ENCODE measurements at regions of chr7 and their contacts with region 1.

Region 1: GRCh38 chr7:159159731-159160130 is 15.1 kb upstream of the VIPR2 start:
- DNase-seq: no peak
- H3K4me3 Mint-ChIP-seq: no peak overlapping the region
- H3K27ac Mint-ChIP-seq: no peak overlapping the region
- H3K4me1 Mint-ChIP-seq: no peaks in the 10 kb centered on the region
- H3K27me3 Mint-ChIP-seq: peaks cover 10% of the 10 kb centered on the region

Region 2: GRCh38 chr7:159036916-159037605 is 122.7 kb before region 1 on chr7:
- intact Hi-C with region 1: no loop called
- DNase-seq: no peak
- H3K4me3 Mint-ChIP-seq: no peak overlapping the region
- H3K27ac Mint-ChIP-seq: no peak overlapping the region
- H3K4me1 Mint-ChIP-seq: peaks cover 6% of the 10 kb centered on the region
- H3K27me3 Mint-ChIP-seq: no peaks in the 10 kb centered on the region

Region 3: DNA sequence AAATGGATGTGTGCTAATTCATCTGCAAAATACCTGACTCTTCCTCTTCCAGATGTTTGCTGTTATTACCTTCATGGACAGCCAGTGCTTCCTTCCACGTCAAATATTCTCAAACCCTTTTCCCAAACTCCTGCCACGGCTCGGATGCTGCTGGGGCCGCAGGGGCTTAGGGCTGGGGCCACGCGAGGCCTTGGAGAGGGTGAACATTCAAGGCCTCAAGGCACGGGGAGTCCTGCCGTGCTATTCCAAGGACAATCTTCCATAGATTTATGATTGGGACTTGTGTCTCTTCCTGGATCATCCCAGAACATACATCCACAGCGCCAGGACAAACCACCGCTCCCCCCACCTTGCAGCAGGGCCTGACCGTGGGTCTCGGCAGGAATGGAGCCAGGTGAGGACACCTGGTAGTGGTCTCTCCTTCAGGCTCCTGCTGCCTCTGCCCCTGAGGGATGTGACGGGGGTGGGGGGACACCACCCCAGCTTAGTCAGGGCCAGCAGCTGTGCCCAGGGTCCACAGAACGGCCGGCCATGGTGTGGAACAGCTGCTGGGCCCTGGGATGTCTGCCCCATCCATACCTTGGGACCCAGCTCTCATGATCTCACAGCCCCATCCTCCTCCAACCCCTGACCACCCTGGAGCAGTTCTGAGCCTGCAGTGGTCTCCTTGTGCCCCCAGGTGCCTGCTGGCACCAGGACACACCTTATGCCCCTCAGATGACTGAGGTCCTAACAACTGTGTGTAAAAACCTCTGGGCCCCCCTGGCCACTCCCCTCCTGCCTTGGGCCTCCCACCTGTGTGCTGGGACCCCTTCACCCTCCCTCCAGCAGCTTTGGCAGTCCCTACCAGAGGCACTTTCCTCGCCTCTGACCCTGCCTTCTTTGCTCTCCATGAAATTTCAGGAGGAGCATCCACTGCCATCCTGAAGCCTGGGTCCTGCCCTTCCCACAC is 31.8 kb before region 1 on chr7:
- intact Hi-C with region 1: loop called (anchors 2 kb)
- DNase-seq: no peak
- H3K4me3 Mint-ChIP-seq: no peak overlapping the region
- H3K27ac Mint-ChIP-seq: no peak overlapping the region
- H3K4me1 Mint-ChIP-seq: no peaks in the 10 kb centered on the region
- H3K27me3 Mint-ChIP-seq: peaks cover 6% of the 10 kb centered on the region